Ovary (tissue), 10 donors: ENCODE measurements at regions of chr3 and their contacts with region 1.

Region 1: GRCh38 chr3:119034256-119035013 is at the start of gene IGSF11:
- DNase-seq: peak; percentile 79 to 89 (median 86)
- H3K4me3 ChIP-seq: peak within 1 kb of the TSS; percentile 58
- H3K27ac ChIP-seq: peak within 1 kb of the TSS; percentile 79
- H3K4me1 ChIP-seq: peaks cover 4% of the 10 kb centered on the region
- H3K27me3 ChIP-seq: no peaks in the 10 kb centered on the region
- CTCF ChIP-seq: peak; percentile 41 to 93 (median 81)
- EP300 ChIP-seq: no peak
- POLR2A ChIP-seq: peak; percentile 29
- total RNA-seq, gene IGSF11: 13.8 to 22.3 (median 18.0) TPM

Region 2: DNA sequence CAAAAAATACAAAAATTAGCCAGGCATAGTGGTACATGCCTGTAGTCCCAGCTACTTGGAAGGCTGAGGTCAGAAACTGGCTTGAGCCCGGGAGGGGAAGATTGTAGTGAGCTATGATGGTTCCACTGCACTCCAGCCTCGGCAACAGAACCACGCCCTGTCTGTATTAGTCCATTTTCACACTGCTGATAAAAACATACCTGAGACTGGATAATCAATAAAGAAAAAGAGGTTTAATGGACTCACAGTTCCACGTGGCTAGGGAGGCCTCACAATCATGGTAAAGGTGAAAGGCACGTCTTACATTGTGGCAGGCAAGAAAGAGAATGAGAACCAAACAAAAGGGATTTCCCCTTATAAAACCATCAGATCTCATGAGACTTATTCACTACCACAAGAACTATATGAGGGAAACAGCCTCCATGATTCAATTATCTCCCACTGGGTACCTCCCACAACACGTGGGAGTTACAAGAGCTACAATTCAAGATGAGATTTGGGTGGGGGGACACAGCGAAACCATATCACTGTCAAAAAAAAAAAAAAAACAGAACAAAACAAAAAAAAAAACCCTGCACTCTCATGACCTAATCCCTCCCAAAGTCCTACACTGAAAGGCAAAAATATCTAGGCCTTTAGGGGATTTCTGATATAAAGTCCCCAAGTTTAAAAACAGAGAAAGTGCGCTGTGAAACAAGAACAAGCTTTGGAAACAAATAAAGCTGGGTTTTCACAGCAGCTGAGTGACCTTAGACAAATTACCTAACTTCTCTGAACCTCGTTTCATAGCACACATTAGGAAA is 224.5 kb before region 1 on chr3:
- intact Hi-C with region 1: no loop called
- DNase-seq: no peak
- H3K4me3 ChIP-seq: no peak overlapping the region
- H3K27ac ChIP-seq: no peak overlapping the region
- H3K4me1 ChIP-seq: no peaks in the 10 kb centered on the region
- H3K27me3 ChIP-seq: no peaks in the 10 kb centered on the region
- CTCF ChIP-seq: no peak
- EP300 ChIP-seq: no peak
- POLR2A ChIP-seq: no peak

Region 3: DNA sequence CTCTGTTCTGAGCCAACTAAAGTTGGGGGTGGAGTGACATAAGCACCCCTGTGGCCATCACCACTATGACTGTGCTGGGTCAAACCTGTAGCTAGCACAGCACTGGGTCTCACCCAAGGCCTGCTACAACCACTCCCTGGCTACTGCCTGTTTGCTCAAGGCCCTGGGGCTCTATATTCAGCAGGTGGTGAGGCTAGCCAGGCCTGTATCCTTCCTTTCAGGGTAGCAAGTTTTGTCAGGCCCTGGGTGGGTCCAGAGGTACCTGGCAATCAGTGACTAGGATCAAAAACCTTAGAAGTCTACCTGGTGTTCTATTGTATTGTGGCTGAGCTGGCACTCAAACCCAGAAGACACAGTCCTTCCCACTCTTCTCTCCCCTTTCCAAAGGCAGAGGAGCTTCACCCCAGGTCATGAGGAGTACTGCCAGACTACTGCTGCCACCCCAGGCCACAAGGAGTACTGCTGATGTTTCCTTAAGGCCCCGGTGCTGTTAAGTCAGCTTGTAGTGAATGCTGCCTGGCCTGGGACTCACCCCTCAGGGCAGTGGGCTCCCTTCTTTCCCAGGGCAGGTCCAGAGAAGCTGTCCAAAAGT is 170.6 kb before region 1 on chr3:
- intact Hi-C with region 1: no loop called
- DNase-seq: no peak
- H3K4me3 ChIP-seq: no peak overlapping the region
- H3K27ac ChIP-seq: no peak overlapping the region
- H3K4me1 ChIP-seq: no peaks in the 10 kb centered on the region
- H3K27me3 ChIP-seq: no peaks in the 10 kb centered on the region
- CTCF ChIP-seq: no peak
- EP300 ChIP-seq: no peak
- POLR2A ChIP-seq: no peak

Region 4: DNA sequence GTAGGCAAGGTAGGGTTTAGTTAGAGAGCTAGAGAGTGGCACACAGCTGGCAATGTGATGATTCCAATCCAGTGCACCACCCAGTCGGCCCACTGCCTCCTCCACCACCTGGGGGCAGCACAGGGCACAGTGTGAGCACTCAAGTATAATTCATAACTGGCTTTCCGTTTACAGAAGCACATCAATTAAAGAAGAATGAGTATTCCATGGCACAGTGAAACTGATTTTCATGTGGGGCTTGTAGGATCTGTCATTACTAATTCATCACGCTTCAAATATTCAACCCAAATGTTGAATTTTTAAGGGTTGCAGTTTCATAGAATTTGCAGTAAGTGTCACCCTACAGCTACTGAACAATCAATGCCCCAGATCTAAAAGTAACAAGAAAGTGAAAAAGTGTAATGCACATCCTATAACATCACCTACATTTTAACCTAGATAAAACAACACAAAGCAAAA is 149.7 kb before region 1 on chr3:
- intact Hi-C with region 1: loop called in 3 of 4 experiments (anchors 2 to 10 kb)
- DNase-seq: peak; percentile 67 to 84 (median 79)
- H3K4me3 ChIP-seq: no peak overlapping the region
- H3K27ac ChIP-seq: no peak overlapping the region
- H3K4me1 ChIP-seq: no peaks in the 10 kb centered on the region
- H3K27me3 ChIP-seq: no peaks in the 10 kb centered on the region
- CTCF ChIP-seq: peak; percentile 75 to 83 (median 77)
- EP300 ChIP-seq: no peak
- POLR2A ChIP-seq: no peak

Region 5: DNA sequence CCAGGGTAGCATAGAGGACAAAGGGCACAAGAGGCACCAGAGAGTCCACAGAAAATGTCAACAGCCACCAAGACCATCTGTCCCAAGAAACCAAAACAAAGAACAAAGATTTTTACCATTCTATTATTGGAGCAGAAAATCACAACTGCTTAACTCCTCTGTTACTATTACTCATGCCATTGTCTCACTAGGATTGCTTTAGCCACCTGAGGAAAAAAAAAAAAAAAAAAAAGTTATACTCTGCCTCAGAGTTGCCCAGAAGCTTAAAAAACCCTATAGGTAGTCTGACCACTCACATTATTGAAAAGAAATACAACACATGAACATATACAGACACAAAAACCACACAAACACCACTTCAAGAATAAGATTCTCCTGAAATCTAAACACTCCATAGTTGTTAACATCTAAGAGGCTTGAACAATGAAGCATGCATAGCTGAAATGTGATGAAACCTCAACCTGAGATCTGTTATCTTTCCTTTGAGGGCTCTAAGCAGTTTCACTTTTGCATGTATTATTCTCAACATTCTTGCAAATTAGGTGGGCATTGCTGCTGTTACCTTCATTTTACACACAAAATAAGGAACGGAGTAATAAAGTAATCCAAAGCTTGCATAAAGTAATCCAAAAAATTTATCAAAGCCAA is 85.2 kb before region 1 on chr3:
- intact Hi-C with region 1: loop called in 1 of 4 experiments (anchors 5 kb)
- DNase-seq: no peak
- H3K4me3 ChIP-seq: no peak overlapping the region
- H3K27ac ChIP-seq: no peak overlapping the region
- H3K4me1 ChIP-seq: no peaks in the 10 kb centered on the region
- H3K27me3 ChIP-seq: no peaks in the 10 kb centered on the region
- CTCF ChIP-seq: no peak
- EP300 ChIP-seq: no peak
- POLR2A ChIP-seq: no peak

Region 6: DNA sequence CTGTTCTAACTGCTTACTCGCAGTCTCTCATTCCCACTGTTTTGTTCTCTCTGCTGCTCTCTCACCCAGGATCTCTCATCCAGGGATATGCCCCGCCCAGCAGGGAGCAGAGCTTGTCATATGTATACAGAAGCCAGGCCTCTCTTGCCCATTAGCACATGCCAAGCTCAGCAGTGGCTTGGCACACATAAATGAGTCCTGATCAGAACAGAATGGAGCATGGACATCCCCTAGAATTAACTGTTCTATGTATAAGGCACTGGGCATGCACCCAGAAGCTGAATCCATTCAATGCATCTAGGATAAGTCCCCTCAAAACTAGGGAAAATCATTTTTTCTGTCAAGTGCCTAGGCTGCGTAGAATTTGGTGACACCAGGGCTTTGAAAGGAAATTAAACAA is 61.4 kb before region 1 on chr3:
- intact Hi-C with region 1: no loop called
- DNase-seq: no peak
- H3K4me3 ChIP-seq: no peak overlapping the region
- H3K27ac ChIP-seq: no peak overlapping the region
- H3K4me1 ChIP-seq: peaks cover 5% of the 10 kb centered on the region
- H3K27me3 ChIP-seq: no peaks in the 10 kb centered on the region
- CTCF ChIP-seq: no peak
- EP300 ChIP-seq: no peak
- POLR2A ChIP-seq: no peak

Region 7: GRCh38 chr3:118991775-118992174 is 42.7 kb before region 1 on chr3:
- intact Hi-C with region 1: loop called in 1 of 4 experiments (anchors 5 kb)
- DNase-seq: peak in 2 of 5 donors; percentile 62 to 71
- H3K4me3 ChIP-seq: no peak overlapping the region
- H3K27ac ChIP-seq: peak overlapping the region in 1 of 2 donors; percentile 63
- H3K4me1 ChIP-seq: peaks cover 13% of the 10 kb centered on the region
- H3K27me3 ChIP-seq: no peaks in the 10 kb centered on the region
- CTCF ChIP-seq: no peak
- EP300 ChIP-seq: no peak
- POLR2A ChIP-seq: no peak

Region 8: DNA sequence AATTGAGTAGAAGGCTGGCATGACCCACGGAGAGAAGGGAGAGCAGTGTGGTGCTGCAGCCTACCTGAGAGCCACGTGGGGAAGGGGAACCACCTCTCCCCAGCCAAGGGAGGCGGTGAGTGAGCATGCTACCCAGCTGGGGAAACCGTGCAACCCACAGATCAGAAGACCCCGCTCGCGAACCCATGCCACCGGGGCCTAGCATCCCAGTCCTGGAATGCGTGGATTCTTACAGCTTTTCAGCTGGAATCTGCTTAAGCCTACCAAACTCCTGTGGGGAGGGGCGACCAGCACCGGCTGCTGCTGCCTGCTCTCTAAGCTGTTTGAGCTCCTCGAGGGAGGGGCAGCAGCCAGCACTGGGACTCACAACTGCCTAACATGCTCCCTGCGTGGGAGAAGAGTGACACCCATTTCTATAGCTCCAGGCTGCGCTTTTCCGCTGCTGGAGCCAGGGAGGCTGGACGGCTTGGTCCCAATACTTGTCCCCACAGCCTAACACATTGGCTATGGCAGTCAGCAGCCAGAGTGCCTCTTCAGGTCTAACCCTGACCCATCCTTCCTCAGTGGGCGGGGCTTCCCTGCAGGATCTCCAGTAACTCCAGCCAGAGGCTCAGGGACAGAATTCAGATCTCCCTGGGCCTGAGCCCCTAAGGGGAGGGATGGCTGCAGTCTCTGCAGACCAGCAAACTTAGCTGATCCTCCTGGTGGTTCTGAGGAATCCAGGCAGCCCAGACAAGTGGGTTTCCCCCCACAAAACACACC is 91.5 kb after region 1 on chr3:
- intact Hi-C with region 1: no loop called
- DNase-seq: no peak
- H3K4me3 ChIP-seq: no peak overlapping the region
- H3K27ac ChIP-seq: no peak overlapping the region
- H3K4me1 ChIP-seq: no peaks in the 10 kb centered on the region
- H3K27me3 ChIP-seq: no peaks in the 10 kb centered on the region
- CTCF ChIP-seq: no peak
- EP300 ChIP-seq: no peak
- POLR2A ChIP-seq: no peak